ENCODE measurements at regions of chr10 and their contacts with region 1.

Region 1: GRCh38 chr10:76303682-76304316 is 872.4 kb downstream of the LRMDA start:
- DNase-seq: peak; percentile 67
- H3K4me3 ChIP-seq: no peak overlapping the region
- H3K27ac ChIP-seq: no peak overlapping the region
- H3K4me1 ChIP-seq: no peaks in the 10 kb centered on the region
- H3K27me3 ChIP-seq: no peaks in the 10 kb centered on the region
- CTCF ChIP-seq: peak; percentile 38 to 61
- POLR2A ChIP-seq: no peak

Region 2: DNA sequence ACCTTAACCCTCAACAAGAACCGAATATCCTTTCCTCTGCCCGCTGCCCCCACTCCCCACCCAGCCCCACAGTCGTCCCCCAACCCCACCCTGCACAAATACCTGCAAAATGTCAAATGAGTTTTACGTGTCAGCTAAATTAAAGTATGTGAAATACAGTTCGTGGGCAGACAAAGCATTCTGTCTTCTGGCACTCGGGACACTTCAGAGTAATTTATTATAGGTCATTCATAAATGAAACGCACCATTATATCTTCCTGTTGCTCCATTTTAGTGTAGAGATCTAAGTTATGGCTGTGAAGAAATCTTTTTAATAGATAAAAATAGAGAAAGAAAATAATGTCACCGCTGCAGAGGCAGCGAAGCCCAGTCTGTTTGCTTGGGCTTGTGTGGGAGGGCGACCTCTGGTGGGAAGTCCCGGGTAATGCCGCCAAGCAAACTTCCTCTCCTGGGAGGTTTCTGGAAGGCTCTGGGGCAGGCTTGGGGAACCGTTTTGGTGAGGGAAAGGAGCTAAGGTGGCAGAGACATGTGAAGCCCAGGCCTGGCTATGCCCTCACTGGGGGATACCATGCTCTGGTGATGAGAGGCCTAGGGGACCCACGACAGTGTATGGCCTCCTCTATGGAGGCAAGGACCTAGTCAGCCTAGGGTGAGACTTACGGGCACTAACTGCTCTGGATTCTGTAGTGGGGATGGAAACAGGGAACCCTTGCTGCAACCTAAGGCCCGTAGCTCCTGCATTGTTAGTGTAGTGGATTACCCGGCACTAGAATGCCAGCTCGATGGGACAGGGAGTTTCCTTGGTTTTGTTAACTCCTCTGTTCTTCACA is 267.5 kb before region 1 on chr10:
- CTCF ChIA-PET with region 1: interaction called, 7 read pairs
- POLR2A ChIA-PET with region 1: interaction called, 7 read pairs
- dilution Hi-C with region 1: no loop called
- intact Hi-C with region 1: loop called (anchors 2 kb)
- DNase-seq: peak; percentile 57
- H3K4me3 ChIP-seq: no peak overlapping the region
- H3K27ac ChIP-seq: no peak overlapping the region
- H3K4me1 ChIP-seq: peaks cover 12% of the 10 kb centered on the region
- H3K27me3 ChIP-seq: no peaks in the 10 kb centered on the region
- CTCF ChIP-seq: peak; percentile 87 to 90
- POLR2A ChIP-seq: no peak

Region 3: GRCh38 chr10:77027576-77027975 is 723.8 kb after region 1 on chr10:
- CTCF ChIA-PET with region 1: no interaction called
- POLR2A ChIA-PET with region 1: no interaction called
- dilution Hi-C with region 1: no loop called
- intact Hi-C with region 1: no loop called
- DNase-seq: no peak
- H3K4me3 ChIP-seq: no peak overlapping the region
- H3K27ac ChIP-seq: no peak overlapping the region
- H3K4me1 ChIP-seq: no peaks in the 10 kb centered on the region
- H3K27me3 ChIP-seq: peaks cover 2% of the 10 kb centered on the region in 2 experiments
- CTCF ChIP-seq: no peak
- POLR2A ChIP-seq: no peak